ENCODE measurements at regions of chrX and their contacts with region 1.

Region 1: DNA sequence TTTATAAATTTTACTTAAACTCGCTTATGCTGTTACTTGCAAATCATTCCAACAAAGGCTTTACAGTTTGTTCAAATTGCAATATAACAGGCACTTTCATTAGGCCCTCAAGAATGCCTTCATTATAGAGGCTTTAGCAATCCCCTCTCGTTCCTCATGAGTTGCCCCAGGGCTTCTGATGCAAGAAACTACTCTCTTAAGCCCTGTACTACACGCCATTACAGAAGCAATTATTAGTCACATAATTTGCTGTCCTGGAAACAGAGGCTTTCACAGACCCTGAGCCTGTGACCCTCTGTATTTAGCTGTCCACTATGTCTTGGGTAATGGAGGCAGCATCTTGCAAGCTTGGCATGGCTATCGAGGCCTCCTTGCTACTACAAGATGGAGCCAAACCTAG is 965.9 kb upstream of the DIAPH2 start:
- DNase-seq: no peak
- H3K4me3 ChIP-seq: no peak overlapping the region
- H3K27ac ChIP-seq: no peak overlapping the region
- H3K4me1 ChIP-seq: no peaks in the 10 kb centered on the region
- H3K27me3 ChIP-seq: peaks cover 0 to 31% of the 10 kb centered on the region in 2 donors
- CTCF ChIP-seq: no peak
- POLR2A ChIP-seq: no peak

Region 2: GRCh38 chrX:94216738-94217137 is 1502.0 kb before region 1 on chrX:
- intact Hi-C with region 1: no loop called
- DNase-seq: no peak
- H3K4me3 ChIP-seq: no peak overlapping the region
- H3K27ac ChIP-seq: no peak overlapping the region
- H3K4me1 ChIP-seq: no peaks in the 10 kb centered on the region
- H3K27me3 ChIP-seq: peaks cover 0 to 18% of the 10 kb centered on the region in 2 donors
- CTCF ChIP-seq: no peak
- POLR2A ChIP-seq: no peak

Region 3: DNA sequence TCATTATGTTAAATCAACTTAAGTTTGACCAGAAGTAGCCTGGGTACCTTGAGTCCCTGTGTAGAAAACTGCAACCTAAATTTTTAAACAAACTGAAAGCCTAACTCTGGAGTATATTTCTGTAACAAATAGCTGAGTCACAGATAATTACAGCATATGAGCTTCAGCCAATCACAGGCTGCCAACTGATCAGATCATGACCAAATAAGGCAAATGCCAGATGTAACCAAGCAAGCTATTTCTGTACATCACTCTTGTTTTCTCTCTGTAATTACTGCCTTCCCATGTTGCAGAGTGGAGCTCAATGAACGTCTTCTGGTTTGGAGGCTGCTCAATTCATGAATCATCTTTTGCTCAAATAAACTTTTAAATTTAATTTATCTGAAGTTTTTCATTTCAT is 15.1 kb before region 1 on chrX:
- intact Hi-C with region 1: loop called (anchors 1 kb)
- DNase-seq: no peak
- H3K4me3 ChIP-seq: no peak overlapping the region
- H3K27ac ChIP-seq: no peak overlapping the region
- H3K4me1 ChIP-seq: no peaks in the 10 kb centered on the region
- H3K27me3 ChIP-seq: peaks cover 0 to 14% of the 10 kb centered on the region in 2 donors
- CTCF ChIP-seq: no peak
- POLR2A ChIP-seq: no peak

Region 4: GRCh38 chrX:95764972-95765451 is 46.3 kb after region 1 on chrX:
- intact Hi-C with region 1: no loop called
- DNase-seq: no peak
- H3K4me3 ChIP-seq: no peak overlapping the region
- H3K27ac ChIP-seq: no peak overlapping the region
- H3K4me1 ChIP-seq: no peaks in the 10 kb centered on the region
- H3K27me3 ChIP-seq: peaks cover 0 to 26% of the 10 kb centered on the region in 2 donors
- CTCF ChIP-seq: no peak
- POLR2A ChIP-seq: no peak

Measured in breast epithelium (tissue), 4 donors.